ENCODE measurements at regions of chr11 and their contacts with region 1.

Region 1: DNA sequence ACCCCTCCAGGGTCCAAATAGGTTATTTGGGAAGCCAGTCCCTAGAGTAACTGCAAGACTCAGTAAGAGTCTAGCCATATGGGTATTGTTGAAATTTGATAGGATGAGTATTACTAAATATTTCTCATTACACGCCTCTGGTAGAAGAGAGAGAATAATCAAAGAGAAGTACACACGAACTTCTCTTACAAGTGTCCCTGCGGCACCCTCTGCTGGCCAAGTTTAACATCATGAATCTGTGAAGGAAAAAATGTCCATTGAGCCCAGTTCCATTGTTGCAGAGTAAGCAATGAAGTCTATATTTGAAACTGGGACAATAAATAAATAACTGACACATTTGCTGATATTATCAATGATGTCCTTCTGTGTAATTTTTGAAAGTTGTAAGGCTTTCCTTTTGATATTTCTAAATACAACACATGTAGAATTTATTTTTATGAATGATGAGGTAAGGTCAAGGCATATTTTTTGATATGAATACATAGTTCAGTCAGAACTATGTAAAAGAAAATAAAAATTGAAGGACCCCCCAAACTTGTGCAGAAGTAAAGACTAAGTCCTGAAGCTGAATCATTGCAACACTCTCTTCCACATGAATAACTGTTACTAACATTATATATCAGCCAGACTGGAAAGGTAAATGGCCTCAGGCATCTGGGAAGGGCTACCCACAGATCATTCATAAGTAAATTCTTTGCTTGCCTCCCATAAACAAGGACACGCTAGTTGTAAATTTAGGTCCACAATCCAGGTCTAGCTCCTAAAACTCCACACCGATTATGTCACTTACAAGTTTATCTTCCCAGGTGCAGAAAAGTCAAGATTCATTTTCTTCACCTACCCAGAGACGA is 10.0 kb downstream of the OR51L1 start:
- DNase-seq: peak in 3 of 5 donors; percentile 25 to 50 (median 30)
- H3K4me3 ChIP-seq: no peak overlapping the region
- H3K27ac ChIP-seq: no peak overlapping the region
- H3K4me1 ChIP-seq: no peaks in the 10 kb centered on the region
- H3K27me3 ChIP-seq: no peaks in the 10 kb centered on the region
- CTCF ChIP-seq: no peak
- EP300 ChIP-seq: no peak
- POLR2A ChIP-seq: no peak

Region 2: DNA sequence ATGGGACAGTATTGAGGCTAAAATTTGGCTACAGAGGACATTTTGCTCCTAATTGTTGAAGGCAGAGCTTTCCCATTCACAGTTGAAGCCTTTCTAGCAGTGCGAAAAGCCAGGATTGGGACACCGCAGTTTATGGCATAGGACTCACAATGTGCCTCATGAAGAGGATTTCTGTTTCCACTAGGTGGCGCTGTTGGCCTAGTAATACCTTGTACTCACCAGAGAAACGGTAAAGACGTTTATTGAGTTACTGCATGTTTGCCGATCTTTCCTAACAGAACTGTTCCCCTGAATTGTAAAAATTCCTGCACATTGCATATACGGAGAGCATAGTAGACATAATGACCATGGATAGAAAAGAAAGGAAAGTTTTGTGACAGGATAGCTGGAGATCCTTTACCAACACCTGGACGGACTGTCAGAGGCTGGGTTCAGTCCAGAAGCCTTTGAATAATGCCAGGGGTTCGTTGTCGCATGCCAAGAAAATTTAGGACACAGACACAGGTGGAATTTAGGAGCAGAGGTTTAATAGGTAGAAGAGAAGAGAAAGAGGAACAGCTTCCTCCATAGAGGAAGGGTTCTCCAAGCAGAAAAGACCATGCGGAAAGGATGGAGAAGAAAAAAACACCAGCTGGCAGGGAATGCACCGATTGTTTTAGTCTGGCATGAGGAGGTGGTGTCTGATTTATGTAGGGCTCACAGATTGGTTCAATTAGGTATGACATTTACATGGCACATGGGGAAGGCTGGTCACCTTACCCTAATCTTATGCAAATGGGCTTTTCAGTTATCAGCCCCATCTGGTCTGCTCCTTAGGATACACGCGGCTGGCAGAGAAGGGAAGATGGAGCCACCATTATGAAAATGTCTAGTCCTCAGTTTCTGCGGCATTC is 378.2 kb before region 1 on chr11:
- intact Hi-C with region 1: loop called in 3 of 4 experiments (anchors 10 kb)
- DNase-seq: peak; percentile 52 to 67 (median 63)
- H3K4me3 ChIP-seq: no peak overlapping the region
- H3K27ac ChIP-seq: no peak overlapping the region
- H3K4me1 ChIP-seq: no peaks in the 10 kb centered on the region
- H3K27me3 ChIP-seq: no peaks in the 10 kb centered on the region
- CTCF ChIP-seq: peak; percentile 33 to 50 (median 34)
- EP300 ChIP-seq: no peak
- POLR2A ChIP-seq: no peak

Region 3: GRCh38 chr11:4636962-4637661 is 367.5 kb before region 1 on chr11 and contains the start of gene OR51D1:
- intact Hi-C with region 1: loop called in 2 of 4 experiments (anchors 10 kb)
- DNase-seq: peak; percentile 62 to 84 (median 72)
- H3K4me3 ChIP-seq: no peak within 1 kb of the TSS
- H3K27ac ChIP-seq: no peak within 1 kb of the TSS
- H3K4me1 ChIP-seq: peaks cover 4% of the 10 kb centered on the region
- H3K27me3 ChIP-seq: no peaks in the 10 kb centered on the region
- CTCF ChIP-seq: peak; percentile 56 to 68 (median 65)
- EP300 ChIP-seq: no peak
- POLR2A ChIP-seq: no peak
- total RNA-seq, gene OR51D1: not detected

Region 4: DNA sequence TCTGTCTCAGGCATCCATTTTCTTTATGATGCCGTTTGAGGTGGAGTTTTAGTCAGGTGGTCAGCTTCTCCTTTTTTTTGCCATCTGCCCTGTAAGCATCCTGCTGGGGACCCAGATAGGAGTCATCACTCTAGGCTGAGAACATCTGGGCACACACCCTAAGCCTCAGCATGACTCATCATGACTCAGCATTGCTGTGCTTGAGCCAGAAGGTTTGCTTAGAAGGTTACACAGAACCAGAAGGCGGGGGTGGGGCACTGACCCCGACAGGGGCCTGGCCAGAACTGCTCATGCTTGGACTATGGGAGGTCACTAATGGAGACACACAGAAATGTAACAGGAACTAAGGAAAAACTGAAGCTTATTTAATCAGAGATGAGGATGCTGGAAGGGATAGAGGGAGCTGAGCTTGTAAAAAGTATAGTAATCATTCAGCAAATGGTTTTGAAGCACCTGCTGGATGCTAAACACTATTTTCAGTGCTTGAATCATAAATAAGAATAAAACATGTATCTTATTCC is 276.0 kb after region 1 on chr11:
- intact Hi-C with region 1: no loop called
- DNase-seq: peak; percentile 55 to 81 (median 66)
- H3K4me3 ChIP-seq: no peak overlapping the region
- H3K27ac ChIP-seq: no peak overlapping the region
- H3K4me1 ChIP-seq: peaks cover 2% of the 10 kb centered on the region
- H3K27me3 ChIP-seq: no peaks in the 10 kb centered on the region
- CTCF ChIP-seq: no peak
- EP300 ChIP-seq: no peak
- POLR2A ChIP-seq: no peak

Measured in ovary (tissue), 10 donors.